CD4-positive, alpha-beta memory T cell (primary cell): ENCODE measurements at regions of chr15 and their contacts with region 1.

Region 1: GRCh38 chr15:80173022-80173759 is 20.4 kb downstream of the FAH start:
- DNase-seq: peak; percentile 55 to 60 (median 59)
- H3K4me3 ChIP-seq: no peak overlapping the region
- H3K4me3 Mint-ChIP-seq: peak overlapping the region in 1 of 8 donors; percentile 15
- H3K27ac ChIP-seq: no peak overlapping the region
- H3K27ac Mint-ChIP-seq: no peak overlapping the region
- H3K4me1 ChIP-seq: no peaks in the 10 kb centered on the region
- H3K4me1 Mint-ChIP-seq: no peaks in the 10 kb centered on the region
- H3K27me3 ChIP-seq: no peaks in the 10 kb centered on the region
- H3K27me3 Mint-ChIP-seq: no peaks in the 10 kb centered on the region

Region 2: DNA sequence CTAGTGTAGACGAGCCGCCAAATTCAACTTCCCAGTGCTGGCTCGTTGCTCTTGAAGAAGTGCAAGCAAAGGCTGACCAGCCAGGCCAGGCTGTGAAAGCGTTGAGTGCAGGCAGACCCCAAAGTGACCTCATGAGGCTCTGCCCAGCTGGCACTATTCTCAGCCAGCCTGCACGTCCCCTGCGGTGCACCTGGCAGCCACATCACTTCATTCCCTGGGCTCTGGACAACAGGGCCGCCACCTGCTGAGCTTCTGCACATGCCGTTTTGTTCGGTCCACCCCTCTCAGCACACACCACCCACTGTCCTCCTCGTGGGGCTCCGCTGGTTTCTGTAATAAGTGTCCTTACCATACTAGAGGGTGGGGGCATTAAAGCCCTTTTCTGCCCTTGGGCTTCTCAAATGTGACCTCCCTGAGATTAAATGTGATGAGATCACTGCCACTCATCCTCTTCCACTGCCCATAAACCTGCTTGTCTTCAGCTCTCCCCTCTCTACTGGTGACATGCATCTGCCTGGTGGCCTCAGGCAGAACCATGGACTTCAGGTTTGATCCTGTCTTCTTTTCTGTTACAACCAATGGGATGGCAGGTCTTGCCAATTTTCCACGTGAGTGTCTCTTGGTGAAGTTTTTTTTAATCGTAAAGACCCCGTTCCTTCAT is 1088.8 kb before region 1 on chr15:
- CTCF ChIA-PET with region 1: no interaction called
- POLR2A ChIA-PET with region 1: no interaction called
- intact Hi-C with region 1: no loop called
- DNase-seq: no peak
- H3K4me3 ChIP-seq: no peak overlapping the region
- H3K4me3 Mint-ChIP-seq: no peak overlapping the region
- H3K27ac ChIP-seq: no peak overlapping the region
- H3K27ac Mint-ChIP-seq: no peak overlapping the region
- H3K4me1 ChIP-seq: no peaks in the 10 kb centered on the region
- H3K4me1 Mint-ChIP-seq: no peaks in the 10 kb centered on the region
- H3K27me3 ChIP-seq: no peaks in the 10 kb centered on the region
- H3K27me3 Mint-ChIP-seq: peaks cover 30 to 48% of the 10 kb centered on the region in 2 donors

Region 3: GRCh38 chr15:79380755-79381497 is 792.3 kb before region 1 on chr15:
- CTCF ChIA-PET with region 1: interaction called, 56 read pairs
- POLR2A ChIA-PET with region 1: no interaction called
- intact Hi-C with region 1: no loop called
- DNase-seq: peak; percentile 47 to 65 (median 59)
- H3K4me3 ChIP-seq: no peak overlapping the region
- H3K4me3 Mint-ChIP-seq: no peak overlapping the region
- H3K27ac ChIP-seq: no peak overlapping the region
- H3K27ac Mint-ChIP-seq: no peak overlapping the region
- H3K4me1 ChIP-seq: no peaks in the 10 kb centered on the region
- H3K4me1 Mint-ChIP-seq: peaks cover 0 to 4% (median 2%) of the 10 kb centered on the region in 4 donors
- H3K27me3 ChIP-seq: no peaks in the 10 kb centered on the region
- H3K27me3 Mint-ChIP-seq: no peaks in the 10 kb centered on the region

Region 4: GRCh38 chr15:79896637-79897379 is 276.4 kb before region 1 on chr15 and contains the start of gene MTHFS:
- CTCF ChIA-PET with region 1: no interaction called
- POLR2A ChIA-PET with region 1: no interaction called
- intact Hi-C with region 1: loop called (anchors 2 kb)
- DNase-seq: peak; percentile 81 to 87 (median 85)
- H3K4me3 ChIP-seq: peak within 1 kb of the TSS; percentile 74 to 84
- H3K4me3 Mint-ChIP-seq: peak within 1 kb of the TSS; percentile 96 to 100 (median 100)
- H3K27ac ChIP-seq: peak within 1 kb of the TSS; percentile 88
- H3K27ac Mint-ChIP-seq: peak within 1 kb of the TSS; percentile 97 to 100 (median 99)
- H3K4me1 ChIP-seq: peaks cover 32% of the 10 kb centered on the region
- H3K4me1 Mint-ChIP-seq: peaks cover 28 to 45% (median 36%) of the 10 kb centered on the region in 4 donors
- H3K27me3 ChIP-seq: no peaks in the 10 kb centered on the region
- H3K27me3 Mint-ChIP-seq: no peaks in the 10 kb centered on the region
- total RNA-seq, gene MTHFS: 21.3 to 25.6 TPM

Region 5: GRCh38 chr15:80160570-80161156 is 12.5 kb before region 1 on chr15:
- CTCF ChIA-PET with region 1: interaction called, 11 read pairs
- POLR2A ChIA-PET with region 1: interaction called, 3 read pairs
- intact Hi-C with region 1: no loop called
- DNase-seq: peak in 4 of 5 donors; percentile 10 to 51 (median 18)
- H3K4me3 ChIP-seq: no peak overlapping the region
- H3K4me3 Mint-ChIP-seq: peak overlapping the region in 1 of 8 donors; percentile 26
- H3K27ac ChIP-seq: no peak overlapping the region
- H3K27ac Mint-ChIP-seq: peak overlapping the region in 5 of 7 donors; percentile 30 to 87 (median 65)
- H3K4me1 ChIP-seq: peaks cover 15% of the 10 kb centered on the region
- H3K4me1 Mint-ChIP-seq: peaks cover 5 to 22% (median 10%) of the 10 kb centered on the region in 4 donors
- H3K27me3 ChIP-seq: no peaks in the 10 kb centered on the region
- H3K27me3 Mint-ChIP-seq: no peaks in the 10 kb centered on the region